ENCODE measurements at regions of chr11 and their contacts with region 1.

Region 1: GRCh38 chr11:130002846-130003716 is 446 bp upstream of the PRDM10 start:
- DNase-seq: peak; percentile 95 to 96 (median 96)
- H3K4me3 ChIP-seq: peak overlapping the region; percentile 80 to 91
- H3K4me3 Mint-ChIP-seq: peak overlapping the region; percentile 99 to 100 (median 100)
- H3K27ac ChIP-seq: peak overlapping the region; percentile 96
- H3K27ac Mint-ChIP-seq: peak overlapping the region; percentile 98 to 100 (median 100)
- H3K4me1 ChIP-seq: peaks cover 35% of the 10 kb centered on the region
- H3K4me1 Mint-ChIP-seq: peaks cover 20 to 51% (median 35%) of the 10 kb centered on the region in 4 donors
- H3K27me3 ChIP-seq: no peaks in the 10 kb centered on the region
- H3K27me3 Mint-ChIP-seq: no peaks in the 10 kb centered on the region

Region 2: GRCh38 chr11:128695539-128696221 is 1307.4 kb before region 1 on chr11:
- CTCF ChIA-PET with region 1: no interaction called
- POLR2A ChIA-PET with region 1: no interaction called
- intact Hi-C with region 1: loop called (anchors 10 kb)
- DNase-seq: peak; percentile 51 to 73 (median 64)
- H3K4me3 ChIP-seq: peak overlapping the region; percentile 77 to 79
- H3K4me3 Mint-ChIP-seq: peak overlapping the region; percentile 94 to 99 (median 96)
- H3K27ac ChIP-seq: peak overlapping the region; percentile 77
- H3K27ac Mint-ChIP-seq: peak overlapping the region; percentile 95 to 99 (median 96)
- H3K4me1 ChIP-seq: peaks cover 59% of the 10 kb centered on the region
- H3K4me1 Mint-ChIP-seq: peaks cover 44 to 84% (median 56%) of the 10 kb centered on the region in 4 donors
- H3K27me3 ChIP-seq: no peaks in the 10 kb centered on the region
- H3K27me3 Mint-ChIP-seq: peaks cover 0 to 6% of the 10 kb centered on the region in 2 donors

Region 3: DNA sequence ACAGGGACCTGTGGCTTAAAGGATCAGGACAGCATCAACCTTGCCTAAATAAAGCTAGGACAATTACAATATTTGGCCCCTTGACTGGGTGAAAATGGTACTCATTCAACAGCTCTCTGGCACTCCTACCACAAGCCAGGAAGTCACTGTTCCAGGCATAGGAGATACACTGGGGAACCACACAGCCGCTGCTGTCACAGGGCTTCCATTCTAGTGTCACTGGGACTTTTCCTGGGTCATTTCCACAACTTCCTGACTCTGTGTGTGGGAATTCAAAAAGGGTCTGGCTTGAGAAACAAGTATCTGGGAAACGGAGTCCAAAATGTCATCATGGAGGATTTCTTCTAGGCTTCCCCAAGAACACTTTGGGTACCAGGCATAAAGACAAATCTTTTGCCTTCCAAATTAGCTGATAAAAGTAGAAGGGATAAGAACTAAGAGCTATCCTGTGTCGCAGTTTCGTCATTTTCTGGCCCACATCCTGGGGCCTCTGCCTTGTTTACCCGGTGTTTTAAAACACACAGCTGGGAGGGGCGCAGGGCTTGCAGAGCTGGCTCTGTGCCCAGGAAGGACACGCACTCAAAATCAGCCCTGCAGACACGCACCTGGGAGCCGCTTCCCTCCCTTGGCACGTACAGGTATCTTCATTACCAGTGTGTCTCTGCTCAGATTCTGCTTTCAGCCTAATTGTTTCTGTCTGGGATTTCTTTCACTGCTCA is 149.4 kb before region 1 on chr11:
- CTCF ChIA-PET with region 1: no interaction called
- POLR2A ChIA-PET with region 1: interaction called, 49 read pairs
- intact Hi-C with region 1: no loop called
- DNase-seq: peak; percentile 88 to 93 (median 90)
- H3K4me3 ChIP-seq: peak overlapping the region in 1 of 2 donors; percentile 28
- H3K4me3 Mint-ChIP-seq: peak overlapping the region; percentile 73 to 89 (median 82)
- H3K27ac ChIP-seq: peak overlapping the region; percentile 51
- H3K27ac Mint-ChIP-seq: peak overlapping the region; percentile 94 to 100 (median 99)
- H3K4me1 ChIP-seq: peaks cover 42% of the 10 kb centered on the region
- H3K4me1 Mint-ChIP-seq: peaks cover 38 to 62% (median 40%) of the 10 kb centered on the region in 4 donors
- H3K27me3 ChIP-seq: no peaks in the 10 kb centered on the region
- H3K27me3 Mint-ChIP-seq: no peaks in the 10 kb centered on the region

Region 4: GRCh38 chr11:129895126-129896041 is 107.7 kb before region 1 on chr11 and contains the start of gene NFRKB:
- CTCF ChIA-PET with region 1: no interaction called
- POLR2A ChIA-PET with region 1: interaction called, 16 read pairs
- intact Hi-C with region 1: loop called (anchors 1 kb)
- DNase-seq: peak; percentile 81 to 89 (median 84)
- H3K4me3 ChIP-seq: peak within 1 kb of the TSS; percentile 61 to 84
- H3K4me3 Mint-ChIP-seq: peak within 1 kb of the TSS; percentile 92 to 94 (median 94)
- H3K27ac ChIP-seq: peak within 1 kb of the TSS; percentile 81
- H3K27ac Mint-ChIP-seq: peak within 1 kb of the TSS; percentile 82 to 93 (median 90)
- H3K4me1 ChIP-seq: peaks cover 29% of the 10 kb centered on the region
- H3K4me1 Mint-ChIP-seq: peaks cover 20 to 51% (median 33%) of the 10 kb centered on the region in 4 donors
- H3K27me3 ChIP-seq: no peaks in the 10 kb centered on the region
- H3K27me3 Mint-ChIP-seq: no peaks in the 10 kb centered on the region
- total RNA-seq, gene NFRKB: 91.9 to 94.9 TPM

Region 5: GRCh38 chr11:129992161-129992944 is 10.7 kb before region 1 on chr11:
- CTCF ChIA-PET with region 1: interaction called, 4 read pairs
- POLR2A ChIA-PET with region 1: interaction called, 30 read pairs
- intact Hi-C with region 1: no loop called
- DNase-seq: peak; percentile 20 to 53 (median 27)
- H3K4me3 ChIP-seq: no peak overlapping the region
- H3K4me3 Mint-ChIP-seq: no peak overlapping the region
- H3K27ac ChIP-seq: no peak overlapping the region
- H3K27ac Mint-ChIP-seq: peak overlapping the region in 2 of 7 donors; percentile 27 to 52
- H3K4me1 ChIP-seq: no peaks in the 10 kb centered on the region
- H3K4me1 Mint-ChIP-seq: peaks cover 7 to 15% (median 12%) of the 10 kb centered on the region in 4 donors
- H3K27me3 ChIP-seq: no peaks in the 10 kb centered on the region
- H3K27me3 Mint-ChIP-seq: no peaks in the 10 kb centered on the region

Region 6: DNA sequence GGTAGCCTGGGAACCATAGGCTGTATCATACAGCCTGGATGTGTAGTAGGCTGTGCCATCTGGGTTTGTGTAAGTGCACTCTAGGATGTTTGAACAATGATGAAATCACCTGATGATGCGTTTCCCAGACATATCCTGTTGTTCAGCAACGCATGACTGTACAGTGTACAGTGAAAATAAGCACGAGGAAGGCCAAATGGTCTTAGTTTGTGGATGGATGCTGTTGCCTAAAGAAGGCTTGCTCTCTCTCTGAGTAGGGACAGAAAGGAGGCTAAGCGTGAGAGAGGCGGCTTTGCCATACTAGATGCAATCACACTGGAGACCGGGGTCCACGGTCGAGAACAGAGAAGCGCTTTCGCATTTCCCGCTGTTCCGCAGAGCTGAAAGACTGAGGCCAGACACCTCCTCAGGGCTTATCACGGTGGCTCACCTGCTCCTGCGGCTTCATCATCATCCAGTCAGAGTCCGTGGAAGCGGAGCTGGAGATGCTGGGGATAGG is 39.1 kb after region 1 on chr11:
- CTCF ChIA-PET with region 1: no interaction called
- POLR2A ChIA-PET with region 1: no interaction called
- intact Hi-C with region 1: no loop called
- DNase-seq: no peak
- H3K4me3 ChIP-seq: no peak overlapping the region
- H3K4me3 Mint-ChIP-seq: no peak overlapping the region
- H3K27ac ChIP-seq: no peak overlapping the region
- H3K27ac Mint-ChIP-seq: no peak overlapping the region
- H3K4me1 ChIP-seq: no peaks in the 10 kb centered on the region
- H3K4me1 Mint-ChIP-seq: peaks cover 0 to 5% (median 1%) of the 10 kb centered on the region in 4 donors
- H3K27me3 ChIP-seq: no peaks in the 10 kb centered on the region
- H3K27me3 Mint-ChIP-seq: peaks cover 8 to 11% of the 10 kb centered on the region in 2 donors

Region 7: DNA sequence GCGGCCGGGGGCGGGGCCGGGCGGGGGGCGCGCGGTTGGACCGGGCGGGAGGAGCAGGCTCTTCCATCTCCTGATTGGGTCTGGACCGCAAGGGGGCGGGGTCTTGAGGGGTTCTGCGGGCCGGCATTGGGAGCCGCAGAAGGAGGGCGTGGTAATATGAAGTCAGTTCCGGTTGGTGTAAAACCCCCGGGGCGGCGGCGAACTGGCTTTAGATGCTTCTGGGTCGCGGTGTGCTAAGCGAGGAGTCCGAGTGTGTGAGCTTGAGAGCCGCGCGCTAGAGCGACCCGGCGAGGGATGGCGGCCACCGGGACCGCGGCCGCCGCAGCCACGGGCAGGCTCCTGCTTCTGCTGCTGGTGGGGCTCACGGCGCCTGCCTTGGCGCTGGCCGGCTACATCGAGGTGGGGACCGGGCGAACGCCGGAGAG is 66.6 kb after region 1 on chr11 and contains the start of gene APLP2:
- CTCF ChIA-PET with region 1: interaction called, 19 read pairs
- POLR2A ChIA-PET with region 1: interaction called, 112 read pairs
- intact Hi-C with region 1: loop called (anchors 1 kb)
- DNase-seq: peak; percentile 96 to 99 (median 96)
- H3K4me3 ChIP-seq: peak within 1 kb of the TSS; percentile 65 to 89
- H3K4me3 Mint-ChIP-seq: peak within 1 kb of the TSS; percentile 93 to 99 (median 98)
- H3K27ac ChIP-seq: peak within 1 kb of the TSS; percentile 74
- H3K27ac Mint-ChIP-seq: peak within 1 kb of the TSS; percentile 94 to 98 (median 97)
- H3K4me1 ChIP-seq: peaks cover 17% of the 10 kb centered on the region
- H3K4me1 Mint-ChIP-seq: peaks cover 16 to 33% (median 20%) of the 10 kb centered on the region in 4 donors
- H3K27me3 ChIP-seq: no peaks in the 10 kb centered on the region
- H3K27me3 Mint-ChIP-seq: no peaks in the 10 kb centered on the region
- total RNA-seq, gene APLP2: 58.7 to 65.3 TPM

Region 8: DNA sequence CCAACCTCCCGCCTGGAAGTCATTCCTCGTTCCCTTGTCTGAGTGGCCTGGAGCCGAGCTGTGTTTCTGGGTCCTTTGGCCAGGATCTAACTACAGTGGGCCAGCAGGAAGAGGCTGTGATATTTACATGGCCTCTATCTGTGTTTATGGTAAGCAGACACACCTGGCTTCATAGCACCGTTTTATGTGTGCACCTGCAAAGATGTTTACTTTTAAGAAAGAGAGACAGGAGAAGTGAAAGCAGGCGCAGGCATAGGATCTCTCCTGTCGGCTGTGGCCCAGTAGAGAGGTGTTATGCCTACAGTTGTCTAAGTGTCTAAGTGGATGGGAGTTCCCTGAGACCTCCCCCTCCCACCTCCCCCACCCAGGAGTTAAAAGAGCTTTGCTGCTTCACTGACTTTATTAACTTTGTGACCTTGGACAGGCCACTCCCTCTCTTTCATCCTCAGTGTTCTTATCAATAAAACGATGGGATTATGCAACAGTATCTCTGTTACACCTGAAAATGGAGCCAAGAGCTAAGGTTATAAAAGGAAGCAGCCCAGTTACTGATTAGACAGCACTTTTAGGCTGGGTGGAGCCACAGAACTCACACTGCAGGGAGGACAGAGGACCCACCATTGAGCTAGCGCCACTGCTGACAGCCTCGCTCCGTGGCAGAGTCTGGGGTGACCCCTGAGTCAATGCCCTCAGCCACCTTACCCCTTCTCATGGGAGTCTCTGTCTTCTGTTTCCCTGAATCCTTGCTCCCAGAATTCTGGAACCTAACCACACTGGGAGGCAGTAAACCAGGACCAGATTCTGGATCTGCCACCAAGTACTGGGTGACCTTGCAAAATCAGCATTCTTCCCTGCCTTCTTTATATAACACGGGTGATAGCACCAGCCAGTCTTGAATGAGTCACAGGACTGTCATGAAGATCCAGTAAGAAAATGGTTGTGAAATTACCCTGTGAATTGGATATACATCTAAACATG is 178.5 kb after region 1 on chr11:
- CTCF ChIA-PET with region 1: no interaction called
- POLR2A ChIA-PET with region 1: no interaction called
- intact Hi-C with region 1: no loop called
- DNase-seq: no peak
- H3K4me3 ChIP-seq: no peak overlapping the region
- H3K4me3 Mint-ChIP-seq: peak overlapping the region in 1 of 8 donors; percentile 42
- H3K27ac ChIP-seq: no peak overlapping the region
- H3K27ac Mint-ChIP-seq: no peak overlapping the region
- H3K4me1 ChIP-seq: no peaks in the 10 kb centered on the region
- H3K4me1 Mint-ChIP-seq: no peaks in the 10 kb centered on the region
- H3K27me3 ChIP-seq: no peaks in the 10 kb centered on the region
- H3K27me3 Mint-ChIP-seq: peaks cover 3 to 5% of the 10 kb centered on the region in 2 donors

Region 9: DNA sequence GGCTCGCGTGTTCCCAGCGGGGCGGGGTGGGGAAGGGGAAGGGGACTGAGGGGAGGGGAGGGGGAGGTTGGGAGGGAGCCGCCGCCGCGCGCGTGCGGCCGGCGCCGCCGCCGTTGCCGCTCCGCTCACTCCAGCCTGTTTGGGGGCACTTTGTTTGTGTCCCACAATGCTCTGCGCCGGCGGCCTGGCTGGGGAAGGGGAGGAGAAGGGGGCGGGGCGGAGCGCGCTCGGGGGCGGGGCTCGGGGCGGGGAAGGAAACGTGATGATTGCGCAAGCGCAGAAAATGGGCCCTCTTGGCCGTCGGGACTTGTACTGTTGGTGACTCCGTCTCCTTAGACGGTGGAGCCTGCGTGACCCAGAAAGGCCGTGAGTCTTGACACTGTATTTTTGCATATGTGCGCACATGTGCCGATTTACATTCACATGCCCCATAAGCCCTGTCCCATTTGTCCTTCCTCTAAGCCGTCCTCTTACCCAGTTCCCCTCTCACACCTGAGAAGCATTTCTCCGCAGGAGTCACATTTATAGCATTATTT is 311.7 kb after region 1 on chr11 and contains the start of gene ZBTB44:
- CTCF ChIA-PET with region 1: no interaction called
- POLR2A ChIA-PET with region 1: no interaction called
- intact Hi-C with region 1: loop called (anchors 2 kb)
- DNase-seq: peak; percentile 87 to 93 (median 88)
- H3K4me3 ChIP-seq: peak within 1 kb of the TSS; percentile 54 to 67
- H3K4me3 Mint-ChIP-seq: peak within 1 kb of the TSS; percentile 89 to 100 (median 98)
- H3K27ac ChIP-seq: peak within 1 kb of the TSS; percentile 72
- H3K27ac Mint-ChIP-seq: peak within 1 kb of the TSS; percentile 95 to 99 (median 98)
- H3K4me1 ChIP-seq: peaks cover 42% of the 10 kb centered on the region
- H3K4me1 Mint-ChIP-seq: peaks cover 24 to 59% (median 32%) of the 10 kb centered on the region in 4 donors
- H3K27me3 ChIP-seq: no peaks in the 10 kb centered on the region
- H3K27me3 Mint-ChIP-seq: no peaks in the 10 kb centered on the region
- total RNA-seq, gene ZBTB44: 73.0 to 76.2 TPM